ENCODE measurements at regions of chr11 and their contacts with region 1.

Region 1: GRCh38 chr11:62652161-62653006 is 718 bp downstream of the INTS5 start:
- DNase-seq: no peak
- H3K4me3 Mint-ChIP-seq: peak overlapping the region; percentile 98
- H3K27ac Mint-ChIP-seq: peak overlapping the region; percentile 94
- H3K4me1 Mint-ChIP-seq: peaks cover 19% of the 10 kb centered on the region
- H3K27me3 Mint-ChIP-seq: no peaks in the 10 kb centered on the region

Region 2: GRCh38 chr11:62463121-62463542 is 189.3 kb before region 1 on chr11:
- intact Hi-C with region 1: no loop called
- DNase-seq: no peak
- H3K4me3 Mint-ChIP-seq: no peak overlapping the region
- H3K27ac Mint-ChIP-seq: no peak overlapping the region
- H3K4me1 Mint-ChIP-seq: peaks cover 3% of the 10 kb centered on the region
- H3K27me3 Mint-ChIP-seq: peaks cover 2% of the 10 kb centered on the region

Region 3: GRCh38 chr11:62612366-62613290 is 39.8 kb before region 1 on chr11 and contains the starts of genes EML3 and ROM1:
- intact Hi-C with region 1: loop called (anchors 1 kb)
- DNase-seq: peak; percentile 97
- H3K4me3 Mint-ChIP-seq: peak within 1 kb of the TSS; percentile 98
- H3K27ac Mint-ChIP-seq: peak within 1 kb of the TSS; percentile 97
- H3K4me1 Mint-ChIP-seq: peaks cover 46% of the 10 kb centered on the region
- H3K27me3 Mint-ChIP-seq: no peaks in the 10 kb centered on the region
- total RNA-seq, gene EML3: 161 and 166 TPM in 2 replicates
- total RNA-seq, gene ROM1: 2.3 and 3.1 TPM in 2 replicates

Region 4: DNA sequence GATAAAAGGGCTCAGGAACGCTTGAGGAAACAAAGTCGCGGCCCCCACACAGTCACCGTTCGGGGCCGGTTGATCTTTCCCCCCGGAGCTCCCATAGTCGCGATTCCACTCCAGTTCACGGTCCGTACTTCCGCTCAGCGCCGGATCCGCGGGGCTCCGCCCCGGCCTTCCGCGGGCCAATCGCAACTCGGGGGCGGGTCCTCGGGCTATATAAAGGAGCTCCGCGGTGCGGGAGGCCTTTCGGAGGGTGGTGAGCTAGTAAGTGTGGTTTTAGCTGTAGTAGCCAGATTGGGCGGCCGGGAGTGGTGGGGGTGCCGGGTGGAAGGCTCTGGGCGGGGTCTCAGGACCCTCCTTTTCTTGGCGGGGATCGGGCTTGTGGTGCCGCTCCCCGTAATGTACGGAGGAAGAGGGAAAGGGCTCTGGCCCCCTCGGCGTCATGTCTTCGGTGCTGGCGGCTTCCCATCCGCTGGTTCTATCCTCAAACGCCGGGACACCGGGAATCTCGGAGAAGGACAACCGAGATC is 12.8 kb after region 1 on chr11 and contains the starts of genes C11orf98 and CSKMT:
- intact Hi-C with region 1: loop called (anchors 1 kb)
- DNase-seq: peak; percentile 99
- H3K4me3 Mint-ChIP-seq: peak within 1 kb of the TSS; percentile 98
- H3K27ac Mint-ChIP-seq: peak within 1 kb of the TSS; percentile 93
- H3K4me1 Mint-ChIP-seq: peaks cover 26% of the 10 kb centered on the region
- H3K27me3 Mint-ChIP-seq: no peaks in the 10 kb centered on the region
- total RNA-seq, gene C11orf98: 143 and 147 TPM in 2 replicates
- total RNA-seq, gene CSKMT: 59.5 and 60.9 TPM in 2 replicates

Region 5: GRCh38 chr11:62678770-62679696 is 26.6 kb after region 1 on chr11 and contains the start of gene UBXN1:
- intact Hi-C with region 1: loop called (anchors 2 kb)
- DNase-seq: peak; percentile 95
- H3K4me3 Mint-ChIP-seq: peak within 1 kb of the TSS; percentile 85
- H3K27ac Mint-ChIP-seq: peak within 1 kb of the TSS; percentile 96
- H3K4me1 Mint-ChIP-seq: peaks cover 27% of the 10 kb centered on the region
- H3K27me3 Mint-ChIP-seq: no peaks in the 10 kb centered on the region
- total RNA-seq, gene UBXN1: 118 and 121 TPM in 2 replicates

Region 6: DNA sequence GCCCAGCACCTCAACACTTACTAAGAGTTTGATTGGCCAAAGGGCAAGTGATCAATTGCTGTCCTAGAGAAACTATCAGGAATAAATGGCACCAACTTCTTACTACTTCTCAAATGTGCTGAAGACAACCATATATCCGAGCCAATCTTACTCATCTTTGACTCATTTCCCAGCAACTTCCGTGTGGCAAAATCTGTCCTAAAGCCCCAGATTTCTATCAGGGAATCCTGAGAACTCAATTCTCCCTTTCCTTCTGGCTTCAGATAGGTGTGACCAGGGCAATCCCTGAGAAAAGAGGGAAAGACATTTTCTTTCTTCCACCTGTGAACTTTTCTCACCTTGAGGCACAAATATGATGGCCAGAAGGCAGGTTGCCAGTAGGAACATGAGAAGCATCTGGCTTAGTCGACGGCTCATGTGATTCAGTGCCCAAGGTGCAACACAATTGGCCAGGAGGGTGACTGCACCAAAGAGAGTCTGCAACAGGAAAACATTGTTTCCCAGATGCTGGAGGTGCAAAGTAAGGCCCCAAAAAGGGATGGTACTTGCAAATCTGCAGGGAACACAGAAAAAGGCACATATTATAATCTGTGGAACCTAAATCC is 513.4 kb after region 1 on chr11:
- intact Hi-C with region 1: no loop called
- DNase-seq: no peak
- H3K4me3 Mint-ChIP-seq: no peak overlapping the region
- H3K27ac Mint-ChIP-seq: no peak overlapping the region
- H3K4me1 Mint-ChIP-seq: no peaks in the 10 kb centered on the region
- H3K27me3 Mint-ChIP-seq: peaks cover 31% of the 10 kb centered on the region

Measured in activated CD4-positive, alpha-beta T cell treated with anti-CD3 and anti-CD28 coated beads, Interleukin-2, amount 10 ng/mL, durations not matched to agents 24 days and 14 days (primary cell).